Activated naive CD8-positive, alpha-beta T cell treated with anti-CD3 and anti-CD28 coated beads, Interleukin-2, amount 10 ng/mL, durations not matched to agents 7 days and 5 days (primary cell): ENCODE measurements at regions of chr20 and their contacts with region 1.

Region 1: GRCh38 chr20:18287915-18288748 is at the start of gene ZNF133:
- DNase-seq: peak; percentile 99
- ATAC-seq: peak; percentile 98
- H3K4me3 Mint-ChIP-seq: peak within 1 kb of the TSS; percentile 85
- H3K27ac Mint-ChIP-seq: peak within 1 kb of the TSS; percentile 99
- H3K4me1 Mint-ChIP-seq: peaks cover 10% of the 10 kb centered on the region
- H3K27me3 Mint-ChIP-seq: peaks cover 13% of the 10 kb centered on the region
- total RNA-seq, gene ZNF133: 9.2 TPM

Region 2: DNA sequence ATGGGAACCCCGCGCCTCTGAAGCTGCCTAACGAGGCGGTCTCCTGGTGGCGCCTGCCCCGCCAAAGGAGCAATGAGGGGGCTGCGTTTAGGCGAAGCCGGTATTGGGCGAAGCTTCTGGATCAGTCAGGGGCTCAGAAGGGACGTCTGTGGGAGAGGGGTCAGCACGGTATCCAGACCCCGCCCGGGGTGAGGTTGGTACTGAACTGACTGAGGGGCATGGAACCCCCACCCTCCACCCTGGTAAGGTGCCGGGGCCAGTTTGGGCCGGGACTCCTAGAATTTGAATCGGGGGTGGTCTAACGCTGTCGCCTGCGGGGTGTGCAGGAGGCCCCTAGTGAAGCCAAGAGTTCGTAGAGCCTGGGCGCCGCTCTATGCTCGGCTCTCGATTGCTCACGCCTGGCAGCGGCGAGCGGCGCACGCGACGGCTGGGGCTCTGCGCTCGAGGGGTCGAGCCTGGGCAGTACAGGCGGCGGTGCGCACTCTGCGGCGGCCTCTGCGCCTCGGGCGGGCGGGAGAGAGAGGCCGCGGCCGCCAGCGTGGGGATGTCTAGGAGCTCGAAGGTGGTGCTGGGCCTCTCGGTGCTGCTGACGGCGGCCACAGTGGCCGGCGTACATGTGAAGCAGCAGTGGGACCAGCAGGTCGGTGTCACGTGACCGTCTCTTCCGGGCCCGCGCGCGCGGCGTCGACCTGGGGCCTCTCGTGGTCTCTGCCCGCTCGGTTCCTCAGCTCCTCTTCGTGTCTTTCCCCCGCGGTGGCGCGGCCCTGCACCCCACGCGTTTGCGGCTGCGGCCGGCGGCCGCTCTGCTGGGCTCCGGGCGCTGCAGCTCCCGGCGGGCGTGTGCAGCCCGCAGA is 150.5 kb before region 1 on chr20 and contains the starts of genes KAT14 and PET117:
- POLR2A ChIA-PET with region 1: interaction called, 24 read pairs
- DNase-seq: peak; percentile 97
- ATAC-seq: peak; percentile 90
- H3K4me3 Mint-ChIP-seq: peak within 1 kb of the TSS; percentile 90
- H3K27ac Mint-ChIP-seq: peak within 1 kb of the TSS; percentile 89
- H3K4me1 Mint-ChIP-seq: peaks cover 20% of the 10 kb centered on the region
- H3K27me3 Mint-ChIP-seq: peaks cover 12% of the 10 kb centered on the region
- total RNA-seq, gene KAT14: 17.7 to 18.0 TPM
- total RNA-seq, gene PET117: 13.1 to 15.7 TPM

Region 3: GRCh38 chr20:18272451-18272850 is 15.7 kb before region 1 on chr20:
- POLR2A ChIA-PET with region 1: no interaction called
- DNase-seq: no peak
- ATAC-seq: no peak
- H3K4me3 Mint-ChIP-seq: no peak overlapping the region
- H3K27ac Mint-ChIP-seq: no peak overlapping the region
- H3K4me1 Mint-ChIP-seq: peaks cover 1% of the 10 kb centered on the region
- H3K27me3 Mint-ChIP-seq: peaks cover 47% of the 10 kb centered on the region